Mammary epithelial cell (primary cell): ENCODE measurements at regions of chr12 and their contacts with region 1.

Region 1: DNA sequence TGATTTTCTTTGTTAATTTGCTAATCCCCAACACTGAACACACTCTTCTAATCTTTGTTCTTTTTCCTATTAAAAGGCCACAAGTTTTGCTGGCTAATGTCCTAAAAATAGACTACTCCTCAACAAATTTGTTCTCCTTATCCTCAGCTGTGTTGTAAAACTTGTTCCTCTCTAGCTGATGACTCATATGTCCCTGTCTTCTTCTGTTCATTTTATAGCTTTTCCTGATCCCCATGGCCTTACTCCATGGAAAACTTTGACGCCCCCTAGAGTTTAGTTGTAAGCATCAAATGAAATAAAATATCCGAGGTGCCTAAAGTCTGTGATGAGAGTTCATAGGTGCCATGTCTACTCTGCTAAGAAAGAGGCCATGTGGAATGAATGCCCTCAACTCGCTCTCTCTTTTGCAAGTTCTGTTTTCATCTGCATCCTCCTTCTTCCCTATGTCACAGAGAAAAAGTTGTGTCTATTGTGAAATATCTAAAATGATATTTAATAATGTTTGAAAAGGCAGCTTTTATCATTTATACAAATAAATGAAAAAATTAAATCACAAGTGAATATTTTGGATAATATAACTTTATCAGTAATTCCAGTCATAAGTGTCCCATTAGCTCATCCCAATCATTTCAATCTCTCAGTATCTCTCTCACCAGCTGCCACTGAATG is 237.9 kb downstream of the IPO8 start:
- DNase-seq: peak; percentile 71
- H3K4me3 ChIP-seq: no peak overlapping the region
- H3K27ac ChIP-seq: no peak overlapping the region
- H3K4me1 ChIP-seq: peaks cover 7% of the 10 kb centered on the region
- H3K27me3 ChIP-seq: no peaks in the 10 kb centered on the region
- CTCF ChIP-seq: peak; percentile 51 to 63

Region 2: GRCh38 chr12:30286345-30286926 is 171.3 kb before region 1 on chr12:
- CTCF ChIA-PET with region 1: no interaction called
- dilution Hi-C with region 1: no loop called
- in situ Hi-C with region 1: no loop called
- intact Hi-C with region 1: loop called (anchors 2 kb)
- DNase-seq: peak; percentile 16
- H3K4me3 ChIP-seq: no peak overlapping the region
- H3K27ac ChIP-seq: no peak overlapping the region
- H3K4me1 ChIP-seq: no peaks in the 10 kb centered on the region
- H3K27me3 ChIP-seq: no peaks in the 10 kb centered on the region
- CTCF ChIP-seq: peak; percentile 69 to 75

Region 3: DNA sequence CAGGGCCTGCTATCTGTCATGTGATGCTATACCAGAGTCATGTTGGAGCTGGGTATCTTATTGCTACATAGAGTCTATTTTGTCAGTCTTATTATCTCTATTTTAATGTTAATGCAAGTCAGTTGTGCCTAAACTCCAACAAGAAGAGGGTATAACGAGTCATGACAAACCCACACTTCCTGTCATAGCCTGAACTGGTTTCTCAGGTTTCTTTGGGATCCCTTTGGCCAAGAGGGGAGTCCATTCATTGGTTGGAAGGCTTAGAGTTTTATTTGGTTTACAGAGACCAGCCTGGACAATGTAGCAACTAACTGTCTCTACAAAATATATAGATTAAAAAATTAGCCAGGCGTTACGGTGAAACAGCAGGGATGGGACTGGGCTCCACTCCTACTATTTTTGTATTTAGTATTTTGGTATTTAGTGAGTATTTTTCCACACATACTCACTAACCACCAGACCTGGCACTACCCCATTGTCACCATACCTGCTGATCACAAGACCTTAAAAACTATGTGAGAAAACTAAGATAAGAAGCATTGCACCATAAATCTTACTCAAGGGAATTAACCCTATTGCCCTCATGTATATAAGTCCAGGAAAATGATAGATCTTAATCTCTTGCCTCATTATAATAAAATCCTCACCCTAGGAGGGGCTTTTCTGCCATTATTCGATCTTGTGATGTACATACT is 149.6 kb before region 1 on chr12:
- CTCF ChIA-PET with region 1: no interaction called
- dilution Hi-C with region 1: no loop called
- in situ Hi-C with region 1: no loop called
- intact Hi-C with region 1: loop called (anchors 5 kb)
- DNase-seq: peak; percentile 29
- H3K4me3 ChIP-seq: no peak overlapping the region
- H3K27ac ChIP-seq: no peak overlapping the region
- H3K4me1 ChIP-seq: peaks cover 6% of the 10 kb centered on the region
- H3K27me3 ChIP-seq: no peaks in the 10 kb centered on the region
- CTCF ChIP-seq: no peak

Region 4: GRCh38 chr12:30417697-30418231 is 40.0 kb before region 1 on chr12:
- CTCF ChIA-PET with region 1: no interaction called
- dilution Hi-C with region 1: no loop called
- in situ Hi-C with region 1: no loop called
- intact Hi-C with region 1: loop called (anchors 1 kb)
- DNase-seq: peak; percentile 98
- H3K4me3 ChIP-seq: peak overlapping the region in 1 of 3 experiments; percentile 27
- H3K27ac ChIP-seq: peak overlapping the region; percentile 92
- H3K4me1 ChIP-seq: peaks cover 57% of the 10 kb centered on the region
- H3K27me3 ChIP-seq: no peaks in the 10 kb centered on the region
- CTCF ChIP-seq: no peak